ENCODE measurements at regions of chr19 and their contacts with region 1.

Region 1: GRCh38 chr19:56217039-56217949 is 15.2 kb downstream of the ZSCAN5C start:
- DNase-seq: no peak
- ATAC-seq: no peak
- H3K4me3 ChIP-seq: no peak overlapping the region
- H3K27ac ChIP-seq: no peak overlapping the region
- H3K4me1 ChIP-seq: no peaks in the 10 kb centered on the region
- H3K27me3 ChIP-seq: no peaks in the 10 kb centered on the region
- CTCF ChIP-seq: no peak

Region 2: DNA sequence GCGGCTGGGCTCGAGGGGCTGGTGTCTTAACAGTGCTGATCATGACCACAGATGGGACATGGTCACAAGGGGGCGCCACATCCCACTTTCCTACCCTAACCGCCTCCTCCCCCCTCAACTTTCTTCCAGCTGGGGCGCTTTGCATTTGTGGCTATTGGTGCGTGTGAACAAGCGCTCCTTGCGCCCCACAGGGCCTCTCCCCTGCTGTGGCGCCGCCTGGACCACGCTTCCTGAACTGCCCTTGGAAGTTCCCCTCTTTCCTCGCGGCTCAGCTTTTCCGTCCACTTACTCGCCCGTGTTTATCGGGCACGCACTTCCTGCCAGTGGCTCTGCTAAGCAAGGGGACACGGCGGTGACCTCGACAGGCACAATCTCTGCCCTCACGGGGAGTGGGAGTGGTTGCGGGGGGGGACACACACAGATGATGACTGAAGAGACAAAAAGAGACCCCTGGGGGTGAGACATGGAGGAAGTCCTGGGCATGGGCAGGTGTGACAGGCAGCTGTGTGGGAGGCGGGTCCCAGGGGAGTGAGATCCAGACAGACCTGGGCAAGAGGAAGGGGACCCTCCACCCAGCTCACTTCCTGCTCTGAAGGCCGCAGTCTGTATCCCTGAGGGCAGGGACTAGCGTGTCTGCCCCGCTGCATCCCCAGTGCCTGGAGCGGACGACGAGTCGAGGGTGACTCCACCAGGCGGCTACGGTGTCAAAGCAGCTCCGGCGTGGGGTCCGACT is 136.5 kb before region 1 on chr19:
- CTCF ChIA-PET with region 1: no interaction called
- POLR2A ChIA-PET with region 1: interaction called, 15 read pairs
- in situ Hi-C with region 1: no loop called
- intact Hi-C with region 1: no loop called
- DNase-seq: no peak
- ATAC-seq: peak; percentile 64
- H3K4me3 ChIP-seq: peak overlapping the region; percentile 32 to 64
- H3K27ac ChIP-seq: peak overlapping the region; percentile 62
- H3K4me1 ChIP-seq: peaks cover 11% of the 10 kb centered on the region
- H3K27me3 ChIP-seq: no peaks in the 10 kb centered on the region
- CTCF ChIP-seq: peak; percentile 78; the same call in 1 of the 2 replicates

Region 3: DNA sequence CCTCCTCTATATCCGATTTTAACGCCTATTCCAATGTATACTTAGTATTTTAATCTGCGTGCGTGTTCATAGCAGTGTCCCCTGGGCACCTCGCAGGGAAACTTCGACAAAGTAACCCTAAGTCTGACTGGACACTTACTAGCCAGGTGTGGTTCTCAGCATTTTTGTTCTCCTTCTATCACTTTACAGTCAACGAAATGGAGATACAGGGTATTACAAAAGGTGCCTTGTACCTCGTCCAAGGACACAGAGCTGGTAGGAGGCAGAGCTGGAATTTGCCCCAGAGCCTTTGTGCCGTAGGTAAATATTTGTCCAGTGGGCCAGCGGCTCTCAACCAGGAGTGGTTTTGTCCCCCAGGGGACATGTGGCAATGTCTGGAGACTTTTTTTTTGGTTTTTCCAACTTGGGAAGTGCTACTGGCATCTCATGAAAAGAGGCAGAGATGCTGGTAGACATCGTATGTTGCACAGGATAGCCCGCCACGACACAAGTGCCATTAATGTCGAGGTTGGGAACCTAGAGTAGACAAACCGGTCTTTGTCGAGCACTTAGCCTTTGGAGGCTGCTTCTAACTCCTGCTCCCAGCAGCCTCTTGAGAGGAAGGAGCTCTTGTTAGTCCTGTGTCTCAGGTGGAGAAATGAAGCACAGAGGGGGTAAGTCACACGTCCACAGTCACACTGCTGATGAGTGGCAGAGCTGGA is 75.1 kb before region 1 on chr19:
- CTCF ChIA-PET with region 1: no interaction called
- POLR2A ChIA-PET with region 1: no interaction called
- in situ Hi-C with region 1: no loop called
- intact Hi-C with region 1: no loop called
- DNase-seq: no peak
- ATAC-seq: no peak
- H3K4me3 ChIP-seq: peak overlapping the region; percentile 61 to 71
- H3K27ac ChIP-seq: peak overlapping the region; percentile 84
- H3K4me1 ChIP-seq: peaks cover 23% of the 10 kb centered on the region
- H3K27me3 ChIP-seq: no peaks in the 10 kb centered on the region
- CTCF ChIP-seq: no peak

Region 4: DNA sequence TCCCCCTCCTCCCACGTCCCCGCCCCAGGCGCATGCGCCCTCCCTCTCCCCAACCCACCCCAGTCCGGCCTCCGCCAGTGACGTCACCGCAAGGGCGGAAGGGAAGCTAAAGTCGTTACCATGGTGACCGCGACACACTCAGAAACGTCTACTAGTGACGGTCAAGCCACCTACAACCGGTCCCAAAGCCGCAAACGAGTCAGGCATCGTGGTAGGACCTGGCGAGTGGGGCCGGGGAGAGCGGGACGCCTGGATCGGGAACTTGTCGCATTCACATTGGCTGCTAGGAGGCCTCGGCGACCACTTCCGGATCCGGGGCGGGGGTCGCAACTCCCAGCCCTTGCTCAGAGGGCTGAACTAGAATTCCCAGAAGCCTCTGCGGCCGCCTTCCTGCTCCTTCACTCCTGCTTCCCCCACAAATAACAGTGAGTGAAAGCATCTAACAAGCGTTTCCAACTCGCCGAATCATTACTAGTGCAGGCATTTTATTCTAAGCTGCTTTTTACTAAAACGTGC is 97.3 kb after region 1 on chr19 and contains the start of gene ZSCAN5A:
- CTCF ChIA-PET with region 1: interaction called, 10 read pairs
- POLR2A ChIA-PET with region 1: no interaction called
- in situ Hi-C with region 1: no loop called
- intact Hi-C with region 1: no loop called
- DNase-seq: peak; percentile 95
- ATAC-seq: peak; percentile 91
- H3K4me3 ChIP-seq: peak within 1 kb of the TSS; percentile 84 to 99
- H3K27ac ChIP-seq: peak within 1 kb of the TSS; percentile 98
- H3K4me1 ChIP-seq: peaks cover 11% of the 10 kb centered on the region; the same call in 1 of the 2 replicates
- H3K27me3 ChIP-seq: no peaks in the 10 kb centered on the region
- CTCF ChIP-seq: no peak
- total RNA-seq, gene ZSCAN5A: 13.8 TPM

Measured in Panc1 (cell line).